ENCODE measurements at regions of chr20 and their contacts with region 1.

Region 1: GRCh38 chr20:63864847-63865640 is at the start of gene TPD52L2:
- DNase-seq: peak; percentile 98 to 99 (median 99)
- ATAC-seq: peak; percentile 94 to 96 (median 95)
- H3K4me3 ChIP-seq: peak within 1 kb of the TSS; percentile 73 to 99 (median 82)
- H3K27ac ChIP-seq: peak within 1 kb of the TSS; percentile 86 to 98 (median 94)
- H3K4me1 ChIP-seq: peaks cover 8 to 55% (median 25%) of the 10 kb centered on the region in 12 donors
- H3K27me3 ChIP-seq: no peaks in the 10 kb centered on the region
- CTCF ChIP-seq: peak in 1 of 12 donors; percentile 3
- POLR2A ChIP-seq: peak; percentile 24 to 89
- total RNA-seq, gene TPD52L2: 65.0 to 122 (median 72.2) TPM

Region 2: DNA sequence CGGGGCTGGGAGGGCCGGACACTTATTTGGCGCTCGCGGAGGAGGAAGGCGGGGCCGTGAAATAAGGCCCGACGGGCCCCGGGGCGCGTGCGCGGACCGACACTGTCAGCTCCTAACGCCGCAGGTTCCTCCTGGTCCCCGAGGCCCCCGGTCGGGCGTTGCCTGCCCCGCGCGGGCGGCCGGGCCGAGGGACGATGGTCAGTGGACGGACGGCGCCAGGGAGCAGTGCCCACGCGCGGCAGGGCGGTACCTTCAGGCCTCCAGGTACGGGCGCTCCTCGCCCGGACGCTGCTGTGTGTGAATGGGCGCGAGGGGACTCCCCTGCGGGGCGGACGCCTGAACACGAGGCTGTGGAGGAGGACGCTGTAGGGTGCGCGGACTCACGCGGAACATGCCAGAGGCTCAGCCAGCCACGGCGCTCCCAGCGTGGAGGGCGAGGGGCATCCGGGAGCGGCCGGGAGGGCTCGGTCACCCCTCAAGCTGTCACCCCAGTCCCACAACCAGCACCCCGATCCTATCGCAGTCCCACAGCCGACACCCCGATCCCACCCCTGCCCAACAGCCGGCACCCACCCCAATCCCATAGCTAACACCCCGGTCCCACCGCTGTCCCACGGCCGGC is 237.8 kb before region 1 on chr20:
- intact Hi-C with region 1: loop called in 1 of 10 experiments (anchors 10 kb)
- DNase-seq: peak; percentile 94 to 98 (median 96)
- ATAC-seq: peak; percentile 84 to 93 (median 92)
- H3K4me3 ChIP-seq: peak overlapping the region; percentile 58 to 99 (median 88)
- H3K27ac ChIP-seq: peak overlapping the region; percentile 88 to 99 (median 97)
- H3K4me1 ChIP-seq: peaks cover 0 to 33% (median 15%) of the 10 kb centered on the region in 12 donors
- H3K27me3 ChIP-seq: no peaks in the 10 kb centered on the region
- CTCF ChIP-seq: no peak
- POLR2A ChIP-seq: peak in 1 of 2 donors; percentile 81

Region 3: DNA sequence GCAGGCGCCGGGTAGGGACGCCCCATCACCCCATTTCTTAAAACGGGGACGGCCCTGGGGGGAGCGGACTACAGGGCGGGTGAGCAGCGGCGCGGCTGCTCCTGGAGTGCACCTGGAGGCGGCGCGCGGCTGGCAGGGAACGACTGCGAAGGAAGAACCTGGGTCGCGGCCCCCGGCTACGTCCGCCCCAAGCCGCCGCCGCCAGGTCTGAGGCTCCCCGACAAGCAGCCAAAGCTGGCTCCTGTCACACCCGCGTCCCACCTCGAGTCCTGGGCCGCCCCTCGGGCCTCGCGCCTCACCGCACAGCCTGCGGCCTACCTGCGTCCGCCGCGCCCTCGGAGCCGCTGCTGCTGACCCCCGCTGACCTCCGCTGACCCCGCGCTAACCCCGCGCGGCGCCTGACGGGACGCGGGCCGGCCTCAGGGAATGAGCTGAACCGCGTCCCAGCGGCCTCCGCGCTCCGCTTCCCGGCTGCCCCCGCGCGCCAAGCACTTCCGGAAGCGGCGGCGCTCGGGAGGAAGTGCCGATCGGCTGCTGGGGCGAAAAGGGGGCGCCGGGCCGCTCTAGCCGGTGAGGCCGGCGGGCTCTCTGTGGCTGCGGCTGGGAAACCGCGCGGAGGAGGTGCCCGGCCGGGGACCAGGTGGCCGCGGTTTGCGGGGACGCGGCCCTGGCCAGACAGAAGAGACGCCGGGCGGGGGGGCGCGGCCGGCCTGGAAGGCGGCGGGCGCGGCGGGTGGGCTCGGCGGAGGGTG is 157.3 kb before region 1 on chr20 and contains the starts of genes ARFRP1 and ZGPAT:
- intact Hi-C with region 1: loop called in 2 of 10 experiments (anchors 5 to 10 kb)
- DNase-seq: peak; percentile 90 to 96 (median 93)
- ATAC-seq: peak; percentile 88 to 96 (median 96)
- H3K4me3 ChIP-seq: peak within 1 kb of the TSS; percentile 53 to 98 (median 87)
- H3K27ac ChIP-seq: peak within 1 kb of the TSS; percentile 76 to 97 (median 94)
- H3K4me1 ChIP-seq: peaks cover 3 to 42% (median 25%) of the 10 kb centered on the region in 12 donors
- H3K27me3 ChIP-seq: no peaks in the 10 kb centered on the region
- CTCF ChIP-seq: peak in 1 of 12 donors; percentile 8
- POLR2A ChIP-seq: peak in 1 of 2 donors; percentile 72
- total RNA-seq, gene ARFRP1: 27.3 to 47.8 (median 33.8) TPM
- total RNA-seq, gene ZGPAT: 12.9 to 22.0 (median 18.5) TPM

Region 4: GRCh38 chr20:63782051-63782471 is 83.0 kb before region 1 on chr20:
- intact Hi-C with region 1: loop called in 9 of 10 experiments (anchors 2 to 5 kb)
- DNase-seq: peak in 1 of 5 donors; percentile 58
- ATAC-seq: no peak
- H3K4me3 ChIP-seq: no peak overlapping the region
- H3K27ac ChIP-seq: no peak overlapping the region
- H3K4me1 ChIP-seq: peaks cover 0 to 22% (median 15%) of the 10 kb centered on the region in 12 donors
- H3K27me3 ChIP-seq: no peaks in the 10 kb centered on the region
- CTCF ChIP-seq: no peak
- POLR2A ChIP-seq: no peak

Region 5: GRCh38 chr20:63830841-63831588 is 34.0 kb before region 1 on chr20 and contains the start of gene ZBTB46:
- intact Hi-C with region 1: loop called in 2 of 10 experiments (anchors 5 kb)
- DNase-seq: peak; percentile 62 to 86 (median 80)
- ATAC-seq: peak in 3 of 4 donors; percentile 11 to 44 (median 28)
- H3K4me3 ChIP-seq: peak within 1 kb of the TSS; percentile 48 to 99 (median 79)
- H3K27ac ChIP-seq: peak within 1 kb of the TSS; percentile 80 to 97 (median 90)
- H3K4me1 ChIP-seq: peaks cover 13 to 77% (median 60%) of the 10 kb centered on the region in 12 donors
- H3K27me3 ChIP-seq: peaks cover 0 to 27% (median 0%) of the 10 kb centered on the region in 9 donors
- CTCF ChIP-seq: no peak
- POLR2A ChIP-seq: peak in 1 of 2 donors; percentile 10
- total RNA-seq, gene ZBTB46: 11.2 to 27.4 (median 14.4) TPM

Measured in heart left ventricle (tissue), 16 donors.